ENCODE measurements at regions of chr11 and their contacts with region 1.

Region 1: GRCh38 chr11:15446929-15447328 is 332.2 kb downstream of the INSC start:
- DNase-seq: no peak
- ATAC-seq: no peak
- H3K4me3 ChIP-seq: no peak overlapping the region
- H3K27ac ChIP-seq: no peak overlapping the region
- H3K4me1 ChIP-seq: no peaks in the 10 kb centered on the region
- H3K27me3 ChIP-seq: peaks cover 0 to 17% (median 0%) of the 10 kb centered on the region in 7 donors
- CTCF ChIP-seq: no peak

Region 2: DNA sequence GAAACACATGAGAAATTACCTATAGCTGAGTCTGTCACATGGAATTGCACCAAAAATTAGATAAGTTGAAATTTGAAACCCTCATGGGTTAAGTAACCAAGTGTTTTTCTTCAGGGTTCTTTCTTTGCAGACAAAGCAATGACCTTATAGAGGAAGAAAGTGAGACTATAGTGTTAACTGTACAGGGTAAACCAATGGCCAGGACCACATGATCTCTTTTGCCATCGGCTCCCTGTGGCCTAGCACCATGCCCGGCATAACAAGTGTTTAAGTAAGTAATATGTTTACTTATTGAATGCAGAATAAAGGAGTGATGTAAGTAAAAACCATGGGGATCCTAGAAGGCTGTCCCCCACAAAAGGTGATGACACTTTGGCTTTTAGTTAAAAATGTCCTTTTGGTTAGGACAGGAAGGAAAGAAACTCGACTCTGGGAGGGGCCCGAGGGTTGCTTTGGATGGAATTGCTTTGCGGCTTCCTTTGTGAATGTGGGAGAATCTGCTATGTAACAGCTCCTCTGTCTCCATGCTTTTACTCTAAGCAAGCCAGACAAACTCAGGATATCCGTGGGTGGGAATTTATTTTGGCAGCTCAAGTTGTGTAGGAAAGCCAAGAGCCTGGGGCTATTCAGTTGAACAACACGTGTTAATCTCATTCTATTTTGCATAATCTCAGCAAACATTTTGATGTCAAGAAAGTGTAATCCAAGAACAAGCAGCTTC is 122.5 kb after region 1 on chr11:
- intact Hi-C with region 1: loop called in 1 of 10 experiments (anchors 5 kb)
- DNase-seq: peak in 1 of 2 donors; percentile 77
- ATAC-seq: peak; percentile 89 to 98 (median 95)
- H3K4me3 ChIP-seq: no peak overlapping the region
- H3K27ac ChIP-seq: peak overlapping the region in 9 of 10 donors; percentile 6 to 78 (median 67)
- H3K4me1 ChIP-seq: peaks cover 0 to 42% (median 12%) of the 10 kb centered on the region in 9 donors
- H3K27me3 ChIP-seq: no peaks in the 10 kb centered on the region
- CTCF ChIP-seq: no peak

Measured in heart right ventricle (tissue), 16 donors.